PC-3 (cell line): ENCODE measurements at regions of chr12 and their contacts with region 1.

Region 1: DNA sequence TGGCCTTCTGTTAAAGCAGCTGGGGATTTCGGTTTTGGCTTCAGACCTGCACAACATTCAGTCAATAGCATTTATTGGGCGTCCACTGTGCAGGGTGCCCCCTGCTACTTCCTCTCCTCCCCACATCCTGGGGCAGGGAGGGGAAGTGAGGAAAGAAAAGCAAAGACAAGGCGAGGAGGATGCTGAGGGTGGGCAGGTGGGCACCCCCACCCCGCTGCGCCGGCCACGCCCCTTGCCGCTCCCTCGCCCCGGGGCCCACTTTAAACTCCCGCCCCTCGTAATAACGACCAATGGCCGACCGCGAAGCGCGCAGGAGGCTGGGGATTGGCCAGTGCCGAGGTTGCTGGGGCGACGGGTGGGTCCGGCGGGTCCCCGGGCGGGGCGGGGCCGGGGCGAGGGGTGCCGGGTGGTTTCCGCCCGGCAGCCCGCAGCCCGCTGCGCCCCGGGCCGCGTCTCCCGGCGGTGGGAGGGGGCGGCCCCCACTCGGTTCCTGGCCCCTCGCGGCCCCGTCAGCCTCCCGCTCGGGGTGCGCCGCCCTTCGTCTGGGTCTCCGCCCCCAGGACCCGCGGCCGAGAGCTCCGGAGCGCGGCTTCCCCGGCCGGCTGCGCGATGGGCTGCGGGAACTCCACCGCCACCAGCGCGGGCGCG is at the start of gene C12orf75:
- DNase-seq: peak; percentile 91
- ATAC-seq: peak; percentile 84
- H3K4me3 ChIP-seq: peak within 1 kb of the TSS; percentile 86
- H3K27ac ChIP-seq: peak within 1 kb of the TSS; percentile 35; the same call in 1 of the 2 replicates
- H3K4me1 ChIP-seq: peaks cover 42% of the 10 kb centered on the region
- H3K27me3 ChIP-seq: no peaks in the 10 kb centered on the region
- CTCF ChIP-seq: no peak
- total RNA-seq, gene C12orf75: 144 and 160 TPM in 2 replicates

Region 2: GRCh38 chr12:105175397-105175990 is 154.9 kb before region 1 on chr12:
- CTCF ChIA-PET with region 1: no interaction called
- POLR2A ChIA-PET with region 1: no interaction called
- intact Hi-C with region 1: no loop called
- DNase-seq: no peak
- ATAC-seq: no peak
- H3K4me3 ChIP-seq: no peak overlapping the region
- H3K27ac ChIP-seq: no peak overlapping the region
- H3K4me1 ChIP-seq: no peaks in the 10 kb centered on the region
- H3K27me3 ChIP-seq: no peaks in the 10 kb centered on the region
- CTCF ChIP-seq: no peak

Region 3: DNA sequence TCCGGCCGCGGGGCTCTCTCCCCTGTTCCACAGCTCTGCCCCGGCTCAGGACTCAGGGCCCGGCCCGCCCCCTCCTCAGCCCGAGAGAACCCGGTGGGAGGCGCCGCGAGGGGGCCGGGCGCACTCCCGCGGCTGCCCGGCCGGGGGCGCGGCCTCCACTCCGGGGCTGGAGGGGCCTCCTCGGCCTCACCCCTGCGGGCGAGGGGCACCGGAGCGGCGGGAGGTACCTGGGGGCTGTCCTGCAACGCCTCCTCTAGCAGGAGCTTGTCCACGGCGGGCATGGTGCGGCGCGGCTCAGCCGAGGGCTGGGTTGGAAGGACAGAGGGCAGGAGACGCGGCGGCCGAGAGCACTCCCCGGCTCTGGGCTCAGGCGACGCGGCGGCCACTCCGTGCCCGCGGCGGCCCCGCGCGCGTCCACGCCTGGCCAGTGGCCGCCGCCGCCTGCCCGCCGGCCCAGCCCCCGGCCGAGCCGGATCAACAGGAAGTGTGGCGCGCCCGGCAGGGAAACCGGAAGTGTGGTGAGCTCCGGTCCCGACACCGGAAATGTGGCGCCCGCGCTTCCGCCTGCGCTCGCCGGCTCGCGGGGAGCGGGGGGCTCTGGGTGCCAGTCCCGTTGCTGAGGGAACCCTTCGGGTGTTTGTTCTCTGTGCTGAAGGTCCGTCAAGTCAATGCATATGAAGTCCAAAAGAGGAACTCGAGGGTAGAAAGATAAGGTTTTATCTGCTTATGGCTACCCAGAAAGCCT is 94.5 kb before region 1 on chr12 and contains the start of gene APPL2:
- CTCF ChIA-PET with region 1: interaction called, 3 read pairs
- POLR2A ChIA-PET with region 1: interaction called, 7 read pairs
- intact Hi-C with region 1: loop called (anchors 2 kb)
- DNase-seq: peak; percentile 92
- ATAC-seq: peak; percentile 90
- H3K4me3 ChIP-seq: peak within 1 kb of the TSS; percentile 85
- H3K27ac ChIP-seq: peak within 1 kb of the TSS; percentile 60
- H3K4me1 ChIP-seq: peaks cover 26% of the 10 kb centered on the region
- H3K27me3 ChIP-seq: no peaks in the 10 kb centered on the region
- CTCF ChIP-seq: peak; percentile 50
- total RNA-seq, gene APPL2: 36.2 and 42.2 TPM in 2 replicates

Region 4: GRCh38 chr12:105292705-105293104 is 37.7 kb before region 1 on chr12:
- CTCF ChIA-PET with region 1: no interaction called
- POLR2A ChIA-PET with region 1: no interaction called
- intact Hi-C with region 1: no loop called
- DNase-seq: peak; percentile 51
- ATAC-seq: peak; percentile 78
- H3K4me3 ChIP-seq: no peak overlapping the region
- H3K27ac ChIP-seq: no peak overlapping the region
- H3K4me1 ChIP-seq: peaks cover 14% of the 10 kb centered on the region
- H3K27me3 ChIP-seq: no peaks in the 10 kb centered on the region
- CTCF ChIP-seq: no peak